ENCODE measurements at regions of chr1 and their contacts with region 1.

Region 1: GRCh38 chr1:213987927-213988506 is at the start of gene PROX1:
- DNase-seq: peak; percentile 73
- H3K4me3 ChIP-seq: peak within 1 kb of the TSS; percentile 46 to 66 (median 60)
- H3K27ac ChIP-seq: peak within 1 kb of the TSS; percentile 73 to 92 (median 86)
- H3K4me1 ChIP-seq: peaks cover 0 to 50% (median 46%) of the 10 kb centered on the region in 4 donors
- H3K27me3 ChIP-seq: peaks cover 34 to 52% (median 38%) of the 10 kb centered on the region in 3 donors
- CTCF ChIP-seq: no peak
- EP300 ChIP-seq: no peak
- POLR2A ChIP-seq: peak; percentile 72 to 73
- total RNA-seq, gene PROX1: 5.4 to 7.7 (median 6.4) TPM

Region 2: DNA sequence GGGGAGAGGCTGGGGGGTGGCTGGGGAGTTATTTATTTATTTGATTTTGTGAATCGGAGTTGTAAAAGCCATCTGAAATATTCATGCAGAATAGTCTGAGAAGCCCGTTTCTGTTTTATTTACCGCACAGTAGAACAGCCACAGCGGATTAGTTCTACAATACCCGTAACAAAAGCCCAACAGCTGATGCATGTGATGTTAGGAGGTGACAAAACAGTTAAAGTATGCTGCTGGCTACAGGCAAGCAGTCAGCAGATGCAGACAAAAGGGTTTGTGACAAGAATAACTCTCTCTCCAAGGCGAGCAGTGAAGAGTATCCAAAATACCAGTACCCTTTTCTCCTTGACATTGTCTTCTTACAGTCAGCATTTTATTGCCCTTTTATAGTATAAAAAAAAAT is 41.8 kb after region 1 on chr1:
- intact Hi-C with region 1: loop called (anchors 5 kb)
- DNase-seq: no peak
- H3K4me3 ChIP-seq: no peak overlapping the region
- H3K27ac ChIP-seq: peak overlapping the region in 3 of 4 donors; percentile 52 to 71 (median 69)
- H3K4me1 ChIP-seq: peaks cover 0 to 37% (median 31%) of the 10 kb centered on the region in 4 donors
- H3K27me3 ChIP-seq: no peaks in the 10 kb centered on the region
- CTCF ChIP-seq: no peak
- EP300 ChIP-seq: peak in 1 of 4 donors; percentile 55
- POLR2A ChIP-seq: no peak

Region 3: GRCh38 chr1:215405211-215405610 is 1417.2 kb after region 1 on chr1:
- intact Hi-C with region 1: no loop called
- DNase-seq: no peak
- H3K4me3 ChIP-seq: no peak overlapping the region
- H3K27ac ChIP-seq: no peak overlapping the region
- H3K4me1 ChIP-seq: no peaks in the 10 kb centered on the region
- H3K27me3 ChIP-seq: no peaks in the 10 kb centered on the region
- CTCF ChIP-seq: no peak
- EP300 ChIP-seq: no peak
- POLR2A ChIP-seq: no peak

Measured in sigmoid colon (tissue), 7 donors.